ENCODE measurements at regions of chr20 and their contacts with region 1.

Region 1: GRCh38 chr20:53594068-53595017 is 704 bp upstream of the ZNF217 start:
- DNase-seq: peak; percentile 97
- ATAC-seq: peak; percentile 73
- H3K4me3 Mint-ChIP-seq: peak overlapping the region; percentile 84
- H3K27ac Mint-ChIP-seq: peak overlapping the region; percentile 94
- H3K4me1 Mint-ChIP-seq: peaks cover 44% of the 10 kb centered on the region
- H3K27me3 Mint-ChIP-seq: no peaks in the 10 kb centered on the region
- CTCF ChIP-seq: no peak

Region 2: DNA sequence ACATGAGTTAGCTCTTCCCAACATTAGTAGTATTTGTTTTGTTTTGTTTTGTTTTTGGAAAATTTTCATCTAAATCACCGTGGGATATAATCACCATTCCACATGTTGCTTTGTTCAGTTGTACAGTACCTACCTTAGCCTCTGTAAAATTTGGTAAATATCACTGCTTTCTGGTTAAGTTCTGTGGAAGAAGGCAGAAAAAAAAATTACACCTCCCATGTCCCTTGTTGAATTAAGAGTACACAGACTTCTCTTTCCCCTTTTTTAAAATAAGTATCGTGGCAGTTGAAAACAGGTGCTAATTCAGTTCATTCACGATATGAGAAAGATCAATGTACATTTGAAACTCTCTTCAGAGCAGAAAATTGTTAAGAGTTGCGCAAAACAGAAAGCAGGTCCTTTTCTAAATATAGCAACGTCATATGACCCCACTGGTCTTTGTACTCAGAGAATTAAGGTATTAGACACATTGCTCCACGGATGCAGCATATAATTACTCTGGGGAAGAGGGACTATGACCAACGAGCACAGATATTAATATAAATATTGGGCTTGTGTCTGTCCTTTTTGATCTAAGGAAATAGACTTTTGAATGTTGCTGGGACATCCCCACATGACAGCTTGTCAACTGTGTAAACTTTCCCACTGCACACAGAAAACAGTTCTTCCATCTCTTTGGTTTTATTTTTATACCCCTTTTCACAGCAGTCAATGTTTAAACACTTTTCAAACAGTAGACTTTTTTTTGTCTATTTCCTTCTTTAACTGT is 57.9 kb after region 1 on chr20:
- CTCF ChIA-PET with region 1: no interaction called
- POLR2A ChIA-PET with region 1: interaction called, 3 read pairs
- intact Hi-C with region 1: loop called (anchors 5 kb)
- DNase-seq: peak; percentile 13
- ATAC-seq: peak; percentile 71
- H3K4me3 Mint-ChIP-seq: peak overlapping the region; percentile 72
- H3K27ac Mint-ChIP-seq: peak overlapping the region; percentile 97
- H3K4me1 Mint-ChIP-seq: peaks cover 43% of the 10 kb centered on the region
- H3K27me3 Mint-ChIP-seq: no peaks in the 10 kb centered on the region
- CTCF ChIP-seq: no peak